ENCODE measurements at regions of chr4 and their contacts with region 1.

Region 1: GRCh38 chr4:38894340-38894982 is 26.9 kb downstream of the FAM114A1 start:
- DNase-seq: no peak
- H3K4me3 ChIP-seq: no peak overlapping the region
- H3K27ac ChIP-seq: no peak overlapping the region
- H3K4me1 ChIP-seq: peaks cover 0 to 2% of the 10 kb centered on the region in 2 donors
- H3K27me3 ChIP-seq: no peaks in the 10 kb centered on the region
- CTCF ChIP-seq: no peak
- POLR2A ChIP-seq: no peak

Region 2: GRCh38 chr4:39014028-39014427 is 119.6 kb after region 1 on chr4:
- intact Hi-C with region 1: no loop called
- DNase-seq: no peak
- H3K4me3 ChIP-seq: no peak overlapping the region
- H3K27ac ChIP-seq: no peak overlapping the region
- H3K4me1 ChIP-seq: no peaks in the 10 kb centered on the region
- H3K27me3 ChIP-seq: no peaks in the 10 kb centered on the region
- CTCF ChIP-seq: no peak
- POLR2A ChIP-seq: no peak

Region 3: DNA sequence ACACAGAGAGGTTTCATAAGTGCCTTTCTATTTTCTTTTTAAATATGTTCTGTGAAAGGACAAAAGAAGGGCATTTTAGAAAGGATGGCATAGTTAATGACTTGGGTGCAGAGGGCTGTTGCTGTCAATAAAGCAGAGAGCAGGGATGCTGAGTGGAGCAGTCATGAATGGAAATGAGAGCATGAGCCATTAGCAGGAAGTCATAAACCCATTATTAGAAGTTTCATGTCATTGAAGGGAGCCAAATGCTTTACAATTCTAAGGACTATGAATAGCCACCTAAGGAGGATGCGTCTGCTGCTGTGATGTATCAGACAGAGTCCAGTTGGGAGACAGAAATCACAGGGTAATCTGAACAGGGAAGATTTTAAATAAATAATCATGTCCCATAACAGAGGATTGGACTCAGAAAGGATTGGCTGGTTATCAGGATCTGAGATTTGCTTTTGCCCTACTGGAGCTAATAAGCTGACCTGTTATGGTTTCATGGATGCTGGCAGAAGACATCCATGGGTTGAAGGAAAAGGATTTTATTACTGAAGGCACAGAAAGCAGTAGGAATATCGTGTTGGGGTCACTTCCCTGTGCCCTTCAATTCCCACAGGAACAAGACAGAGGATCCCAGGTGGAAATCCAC is 240.3 kb after region 1 on chr4:
- intact Hi-C with region 1: loop called (anchors 10 kb)
- DNase-seq: no peak
- H3K4me3 ChIP-seq: no peak overlapping the region
- H3K27ac ChIP-seq: no peak overlapping the region
- H3K4me1 ChIP-seq: no peaks in the 10 kb centered on the region
- H3K27me3 ChIP-seq: no peaks in the 10 kb centered on the region
- CTCF ChIP-seq: no peak
- POLR2A ChIP-seq: no peak

Measured in thyroid gland (tissue), 4 donors.